CD14-positive monocyte (primary cell): ENCODE measurements at regions of chr14 and their contacts with region 1.

Region 1: DNA sequence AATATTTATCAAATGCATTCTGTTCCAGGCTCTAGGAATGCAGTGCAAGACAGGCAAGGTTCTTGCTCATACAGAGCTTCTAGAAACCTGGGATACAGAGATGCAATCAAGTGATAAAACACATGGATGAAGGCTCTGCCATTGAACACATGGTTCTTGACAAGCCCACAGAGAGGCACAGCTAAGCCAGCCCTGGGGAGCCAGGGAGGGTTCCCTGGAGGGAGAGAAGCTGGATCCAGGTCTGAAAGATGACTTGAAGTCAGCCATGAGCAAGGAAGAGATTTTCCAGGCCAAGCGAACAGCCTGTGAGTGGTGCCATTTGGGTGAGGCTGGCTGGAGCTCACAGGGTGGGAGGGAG is 66.2 kb downstream of the IRF2BPL start:
- DNase-seq: no peak
- H3K4me3 ChIP-seq: peak overlapping the region in 2 of 3 experiments; percentile 43 to 70
- H3K4me3 Mint-ChIP-seq: peak overlapping the region; percentile 82 to 96
- H3K27ac ChIP-seq: peak overlapping the region; percentile 95 to 97
- H3K27ac Mint-ChIP-seq: peak overlapping the region; percentile 99 to 100 (median 99)
- H3K4me1 ChIP-seq: peaks cover 26 to 39% of the 10 kb centered on the region in 2 donors
- H3K4me1 Mint-ChIP-seq: peaks cover 54% of the 10 kb centered on the region
- H3K27me3 ChIP-seq: no peaks in the 10 kb centered on the region
- H3K27me3 Mint-ChIP-seq: peaks cover 0 to 6% (median 5%) of the 10 kb centered on the region in 3 donors
- CTCF ChIP-seq: no peak

Region 2: DNA sequence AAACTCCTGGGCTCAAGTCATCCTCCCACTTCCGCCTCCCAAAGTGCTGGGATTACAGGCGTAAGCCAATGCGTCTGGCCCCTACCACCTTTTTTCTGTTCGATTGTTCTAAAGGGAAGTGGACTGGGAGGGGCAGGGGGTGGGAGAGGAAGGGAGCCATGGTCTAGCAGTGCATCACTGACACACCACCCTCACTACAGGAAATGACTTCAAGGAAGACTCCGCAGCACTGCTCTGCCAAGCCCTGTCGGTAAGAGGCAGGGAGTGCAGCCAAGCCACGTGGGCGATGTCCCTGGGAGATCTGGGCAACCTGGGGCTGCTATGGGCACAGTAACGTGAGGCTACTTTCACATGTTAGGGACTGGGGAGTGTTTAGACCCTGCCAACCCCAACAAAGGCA is 118.1 kb before region 1 on chr14:
- intact Hi-C with region 1: no loop called
- DNase-seq: peak; percentile 83 to 92 (median 87)
- H3K4me3 ChIP-seq: peak overlapping the region in 1 of 3 experiments; percentile 34
- H3K4me3 Mint-ChIP-seq: peak overlapping the region in 1 of 2 donors; percentile 35
- H3K27ac ChIP-seq: peak overlapping the region in 1 of 2 donors; percentile 30
- H3K27ac Mint-ChIP-seq: peak overlapping the region; percentile 64 to 90 (median 75)
- H3K4me1 ChIP-seq: peaks cover 36 to 37% of the 10 kb centered on the region in 2 donors
- H3K4me1 Mint-ChIP-seq: peaks cover 32% of the 10 kb centered on the region
- H3K27me3 ChIP-seq: no peaks in the 10 kb centered on the region
- H3K27me3 Mint-ChIP-seq: peaks cover 0 to 4% (median 3%) of the 10 kb centered on the region in 3 donors
- CTCF ChIP-seq: peak; percentile 67

Region 3: GRCh38 chr14:77028384-77029231 is 66.3 kb after region 1 on chr14 and contains the start of gene IRF2BPL:
- intact Hi-C with region 1: loop called (anchors 2 to 5 kb)
- DNase-seq: peak; percentile 96 to 98 (median 97)
- H3K4me3 ChIP-seq: peak within 1 kb of the TSS; percentile 68 to 86 (median 85)
- H3K4me3 Mint-ChIP-seq: peak within 1 kb of the TSS; percentile 84 to 90
- H3K27ac ChIP-seq: peak within 1 kb of the TSS; percentile 93 to 96
- H3K27ac Mint-ChIP-seq: peak within 1 kb of the TSS; percentile 89 to 98 (median 95)
- H3K4me1 ChIP-seq: peaks cover 58 to 73% of the 10 kb centered on the region in 2 donors
- H3K4me1 Mint-ChIP-seq: peaks cover 59% of the 10 kb centered on the region
- H3K27me3 ChIP-seq: no peaks in the 10 kb centered on the region
- H3K27me3 Mint-ChIP-seq: peaks cover 0 to 1% (median 0%) of the 10 kb centered on the region in 3 donors
- CTCF ChIP-seq: no peak
- polyA plus RNA-seq, gene IRF2BPL: 1.4 to 17.9 (median 1.9) TPM